ENCODE measurements at regions of chr19 and their contacts with region 1.

Region 1: DNA sequence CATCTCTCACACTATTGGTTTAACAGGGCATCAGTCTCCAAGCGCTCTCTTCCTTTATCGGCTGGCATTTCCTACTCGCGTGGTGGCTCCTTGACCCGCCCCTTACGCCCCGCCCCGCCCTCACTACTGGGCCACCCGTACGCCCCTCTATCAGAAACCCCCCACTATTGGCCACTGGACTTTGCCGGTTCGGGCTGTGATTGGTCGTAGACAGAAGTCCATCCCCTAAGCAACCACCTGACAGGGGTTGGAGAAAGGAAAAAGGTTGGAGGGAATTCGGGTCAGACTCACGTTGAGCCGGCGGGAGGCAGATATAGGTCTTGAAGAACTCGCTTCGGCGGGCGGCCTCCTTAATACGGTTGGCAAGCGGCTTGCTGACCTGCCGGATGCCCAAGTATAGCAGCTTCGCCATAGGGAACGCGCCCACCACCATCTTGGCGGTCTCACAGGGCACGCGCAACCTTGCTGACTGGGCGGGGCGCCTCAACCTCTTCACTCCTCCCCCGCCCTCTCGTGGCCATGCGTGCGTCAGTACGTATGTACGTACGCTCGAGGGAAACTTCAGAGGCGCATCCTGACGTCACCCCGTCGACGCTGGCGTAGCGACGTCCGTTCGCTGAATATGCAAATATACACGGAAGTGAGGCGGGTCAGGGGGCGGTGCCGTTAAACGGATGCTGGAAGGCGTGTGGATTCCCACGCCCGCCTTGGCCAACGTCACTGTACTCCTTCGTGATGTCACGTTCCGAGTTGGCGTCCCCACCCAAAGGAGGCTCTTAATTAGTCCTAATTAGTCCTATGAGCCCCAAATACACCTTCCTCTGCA is at the start of gene OPA3:
- DNase-seq: peak; percentile 88 to 100 (median 99)
- ATAC-seq: peak; percentile 92
- H3K4me3 ChIP-seq: peak within 1 kb of the TSS; percentile 85
- H3K4me3 Mint-ChIP-seq: peak within 1 kb of the TSS; percentile 90 to 99 (median 94)
- H3K27ac ChIP-seq: peak within 1 kb of the TSS; percentile 99
- H3K27ac Mint-ChIP-seq: peak within 1 kb of the TSS; percentile 97 to 100 (median 99)
- H3K4me1 ChIP-seq: peaks cover 6 to 10% of the 10 kb centered on the region in 2 donors
- H3K4me1 Mint-ChIP-seq: peaks cover 0 to 28% (median 20%) of the 10 kb centered on the region in 7 donors
- H3K27me3 ChIP-seq: no peaks in the 10 kb centered on the region
- H3K27me3 Mint-ChIP-seq: peaks cover 5 to 9% (median 7%) of the 10 kb centered on the region in 5 donors
- total RNA-seq, gene OPA3: 7.8 to 14.3 (median 9.0) TPM

Region 2: DNA sequence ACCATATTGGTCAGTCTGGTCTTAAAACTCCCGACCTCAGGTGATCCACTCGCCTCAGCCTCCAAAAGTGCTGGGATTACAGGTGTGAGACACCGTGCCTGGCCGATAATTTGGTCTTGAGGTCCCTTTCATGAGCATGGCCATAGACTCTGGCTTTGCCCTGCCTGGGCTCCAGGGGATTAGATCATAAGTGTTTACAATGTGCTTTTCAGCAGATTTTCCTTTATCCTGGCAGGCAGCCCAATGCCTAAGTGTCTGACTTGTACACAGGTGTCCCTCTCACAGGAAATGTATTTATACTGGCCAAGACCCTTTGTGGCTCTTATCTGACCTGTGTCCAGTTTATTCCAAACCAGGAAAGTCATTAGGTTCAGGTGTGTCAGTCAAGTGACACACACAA is 759.8 kb before region 1 on chr19:
- CTCF ChIA-PET with region 1: no interaction called
- POLR2A ChIA-PET with region 1: no interaction called
- intact Hi-C with region 1: no loop called
- DNase-seq: no peak
- ATAC-seq: no peak
- H3K4me3 ChIP-seq: no peak overlapping the region
- H3K4me3 Mint-ChIP-seq: no peak overlapping the region
- H3K27ac ChIP-seq: no peak overlapping the region
- H3K27ac Mint-ChIP-seq: no peak overlapping the region
- H3K4me1 ChIP-seq: no peaks in the 10 kb centered on the region
- H3K4me1 Mint-ChIP-seq: no peaks in the 10 kb centered on the region
- H3K27me3 ChIP-seq: no peaks in the 10 kb centered on the region
- H3K27me3 Mint-ChIP-seq: peaks cover 0 to 7% (median 3%) of the 10 kb centered on the region in 5 donors

Region 3: DNA sequence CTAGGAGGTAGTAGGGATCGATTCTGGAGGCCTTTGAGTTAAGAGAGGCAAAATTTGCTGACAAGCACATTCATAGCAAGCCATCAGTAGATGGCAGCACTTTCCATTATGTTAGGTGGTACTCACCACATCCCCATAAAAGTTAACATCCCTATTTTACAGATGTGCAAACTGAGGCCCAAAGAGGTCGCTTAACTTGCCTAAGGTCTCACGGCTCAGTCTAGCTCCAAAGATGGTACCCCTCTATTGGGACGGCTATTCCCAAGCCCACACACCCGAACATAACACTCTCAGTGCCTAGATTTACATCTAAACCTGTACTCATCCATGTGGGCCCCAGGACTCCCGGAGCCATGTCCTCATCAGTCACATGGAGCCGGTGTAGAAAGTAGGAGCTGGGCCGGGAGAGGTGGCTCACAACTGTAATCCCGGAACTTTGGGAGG is 138.2 kb before region 1 on chr19:
- CTCF ChIA-PET with region 1: no interaction called
- POLR2A ChIA-PET with region 1: no interaction called
- intact Hi-C with region 1: loop called in 1 of 2 experiments (anchors 1 kb)
- DNase-seq: no peak
- ATAC-seq: no peak
- H3K4me3 ChIP-seq: no peak overlapping the region
- H3K4me3 Mint-ChIP-seq: peak overlapping the region in 4 of 10 donors; percentile 21 to 56 (median 31)
- H3K27ac ChIP-seq: no peak overlapping the region
- H3K27ac Mint-ChIP-seq: peak overlapping the region in 6 of 9 donors; percentile 44 to 89 (median 64)
- H3K4me1 ChIP-seq: peaks cover 29 to 34% of the 10 kb centered on the region in 2 donors
- H3K4me1 Mint-ChIP-seq: peaks cover 30 to 67% (median 56%) of the 10 kb centered on the region in 7 donors
- H3K27me3 ChIP-seq: no peaks in the 10 kb centered on the region
- H3K27me3 Mint-ChIP-seq: peaks cover 0 to 6% (median 0%) of the 10 kb centered on the region in 5 donors

Region 4: DNA sequence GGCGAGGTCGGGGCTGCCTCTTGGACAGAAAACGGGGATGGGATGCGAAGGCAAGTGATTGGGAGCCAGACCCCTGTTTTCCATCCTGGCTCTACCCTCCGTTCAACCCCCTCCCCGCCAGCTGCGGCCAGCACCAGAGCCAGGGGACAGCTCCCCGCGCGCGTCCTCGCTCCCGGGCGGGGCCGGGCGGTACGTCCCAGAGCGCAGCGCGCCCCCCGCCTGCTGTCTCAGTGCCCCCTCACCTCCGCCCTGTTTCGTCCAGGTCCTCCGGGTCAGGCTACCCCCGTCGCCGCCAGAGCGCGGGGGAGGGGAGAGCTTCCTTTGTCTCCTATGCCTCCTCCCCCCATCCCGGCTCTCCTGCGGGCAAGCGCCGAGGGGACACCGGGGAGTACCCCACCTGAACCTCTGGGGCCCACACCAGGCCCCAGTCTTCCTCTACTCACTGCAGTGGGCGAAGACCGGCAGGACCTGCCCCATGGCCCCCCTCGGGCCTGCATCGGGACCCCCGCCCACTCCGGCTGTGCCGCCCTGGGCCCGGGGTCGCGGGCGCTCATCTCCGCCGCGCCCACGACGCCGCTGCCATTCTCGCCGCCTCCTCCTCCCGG is 88.1 kb before region 1 on chr19:
- CTCF ChIA-PET with region 1: no interaction called
- POLR2A ChIA-PET with region 1: interaction called, 3 read pairs
- intact Hi-C with region 1: loop called in 1 of 2 experiments (anchors 1 kb)
- DNase-seq: peak in 7 of 9 donors; percentile 44 to 75 (median 55)
- ATAC-seq: peak; percentile 33
- H3K4me3 ChIP-seq: peak overlapping the region; percentile 65
- H3K4me3 Mint-ChIP-seq: peak overlapping the region; percentile 72 to 97 (median 77)
- H3K27ac ChIP-seq: no peak overlapping the region
- H3K27ac Mint-ChIP-seq: peak overlapping the region in 4 of 9 donors; percentile 12 to 87 (median 48)
- H3K4me1 ChIP-seq: peaks cover 28 to 38% of the 10 kb centered on the region in 2 donors
- H3K4me1 Mint-ChIP-seq: peaks cover 28 to 52% (median 48%) of the 10 kb centered on the region in 7 donors
- H3K27me3 ChIP-seq: no peaks in the 10 kb centered on the region
- H3K27me3 Mint-ChIP-seq: peaks cover 12 to 37% (median 19%) of the 10 kb centered on the region in 5 donors

Region 5: DNA sequence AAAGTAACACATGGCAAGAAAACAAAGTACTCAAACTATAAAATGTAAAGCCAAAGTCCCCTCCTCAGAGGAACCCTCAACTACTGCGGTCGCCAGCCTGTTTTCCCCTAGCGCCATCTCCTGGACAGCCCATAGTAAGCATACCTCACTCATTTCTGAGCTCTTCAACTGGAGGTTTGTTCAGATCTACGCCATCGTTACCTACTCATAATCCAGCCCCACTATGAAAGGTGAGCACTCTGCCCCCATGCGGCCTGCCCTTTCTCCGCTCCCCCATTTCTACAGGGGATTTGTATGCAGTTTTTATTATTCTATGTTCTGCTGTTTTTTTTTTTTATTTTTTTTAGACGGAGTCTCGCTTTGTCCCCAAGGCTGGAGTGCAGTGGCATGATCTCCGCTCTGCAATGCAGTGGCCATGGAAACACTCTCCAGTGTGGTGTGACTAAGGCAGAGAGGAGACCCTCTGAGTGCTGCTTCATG is 26.1 kb before region 1 on chr19:
- CTCF ChIA-PET with region 1: interaction called, 3 read pairs
- POLR2A ChIA-PET with region 1: interaction called, 3 read pairs
- intact Hi-C with region 1: loop called in 1 of 2 experiments (anchors 1 kb)
- DNase-seq: peak; percentile 37 to 85 (median 81)
- ATAC-seq: peak; percentile 99
- H3K4me3 ChIP-seq: no peak overlapping the region
- H3K4me3 Mint-ChIP-seq: peak overlapping the region in 3 of 10 donors; percentile 52 to 75 (median 59)
- H3K27ac ChIP-seq: peak overlapping the region; percentile 18
- H3K27ac Mint-ChIP-seq: peak overlapping the region in 8 of 9 donors; percentile 14 to 86 (median 66)
- H3K4me1 ChIP-seq: peaks cover 0 to 29% of the 10 kb centered on the region in 2 donors
- H3K4me1 Mint-ChIP-seq: peaks cover 20 to 48% (median 34%) of the 10 kb centered on the region in 7 donors
- H3K27me3 ChIP-seq: no peaks in the 10 kb centered on the region
- H3K27me3 Mint-ChIP-seq: no peaks in the 10 kb centered on the region

Region 6: DNA sequence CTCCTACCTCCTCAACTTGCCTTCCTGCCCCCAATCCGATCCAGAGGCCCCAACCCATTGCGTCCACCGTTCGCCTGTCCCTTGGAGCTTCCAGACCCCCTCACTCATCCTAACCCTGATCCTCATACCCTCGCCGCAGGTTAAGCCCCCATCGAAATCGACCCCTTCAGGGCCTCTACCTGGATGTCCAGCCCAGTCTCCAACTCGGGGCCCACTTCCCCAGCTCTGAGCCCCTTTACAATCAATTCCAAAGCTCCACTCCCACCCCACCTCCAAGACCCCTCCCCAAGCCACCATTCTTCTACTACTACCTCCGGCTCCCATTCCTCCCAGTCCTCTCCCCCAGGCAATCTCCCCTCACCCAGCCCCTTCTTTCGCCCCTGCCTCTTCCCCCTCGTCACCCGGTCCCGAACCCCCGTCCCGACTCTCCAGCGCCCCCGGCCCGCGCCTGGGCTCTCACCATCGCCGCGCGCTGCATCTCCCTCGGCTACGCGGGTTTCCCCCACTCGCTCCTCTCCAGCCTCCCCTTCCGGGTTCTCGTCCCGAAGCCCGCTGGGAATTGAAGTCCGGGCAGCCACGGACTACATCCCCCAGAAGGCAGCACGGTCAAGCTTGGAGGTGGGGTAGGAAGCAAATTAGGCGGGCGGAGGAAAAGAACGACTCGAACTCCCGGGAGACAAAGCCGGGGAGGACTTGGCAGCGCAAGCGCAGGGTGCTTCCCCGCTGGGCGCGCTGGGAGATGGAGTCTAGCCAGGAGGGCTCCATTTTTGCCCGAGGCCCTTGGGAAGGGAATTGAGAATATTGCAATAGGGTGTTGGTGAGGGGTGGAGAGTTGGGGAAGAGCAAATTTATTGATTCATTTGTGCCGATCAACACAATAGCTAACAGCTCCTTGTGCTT is 146.1 kb after region 1 on chr19 and contains the start of gene FBXO46:
- CTCF ChIA-PET with region 1: no interaction called
- POLR2A ChIA-PET with region 1: no interaction called
- intact Hi-C with region 1: loop called in 1 of 2 experiments (anchors 1 kb)
- DNase-seq: peak; percentile 74 to 94 (median 90)
- ATAC-seq: peak; percentile 99
- H3K4me3 ChIP-seq: peak within 1 kb of the TSS; percentile 96
- H3K4me3 Mint-ChIP-seq: peak within 1 kb of the TSS; percentile 85 to 98 (median 92)
- H3K27ac ChIP-seq: peak within 1 kb of the TSS; percentile 92
- H3K27ac Mint-ChIP-seq: peak within 1 kb of the TSS; percentile 60 to 93 (median 91)
- H3K4me1 ChIP-seq: peaks cover 6 to 14% of the 10 kb centered on the region in 2 donors
- H3K4me1 Mint-ChIP-seq: peaks cover 27 to 41% (median 33%) of the 10 kb centered on the region in 7 donors
- H3K27me3 ChIP-seq: no peaks in the 10 kb centered on the region
- H3K27me3 Mint-ChIP-seq: peaks cover 0 to under 1% (median 0%) of the 10 kb centered on the region in 5 donors
- total RNA-seq, gene FBXO46: 21.2 to 52.9 (median 36.6) TPM

Region 7: DNA sequence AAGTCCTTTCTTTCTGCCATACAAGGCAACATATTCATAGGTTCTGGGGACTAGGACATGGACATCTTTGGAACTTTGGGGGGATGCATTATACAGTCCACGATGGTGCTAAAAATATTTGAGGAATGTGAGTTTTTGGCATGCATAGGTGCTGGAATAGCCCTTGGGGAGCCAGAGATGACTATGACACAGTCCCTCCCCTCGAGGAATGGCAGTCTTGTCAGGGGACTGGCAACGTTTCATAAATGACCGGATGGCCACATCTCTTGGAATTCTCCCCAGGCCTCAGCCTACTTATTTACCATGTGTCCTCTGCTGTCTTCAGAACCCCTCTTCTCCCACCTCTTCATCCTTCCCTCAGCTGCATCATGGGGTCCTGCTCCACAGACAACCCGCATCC is 162.3 kb after region 1 on chr19:
- CTCF ChIA-PET with region 1: no interaction called
- POLR2A ChIA-PET with region 1: no interaction called
- intact Hi-C with region 1: no loop called
- DNase-seq: no peak
- ATAC-seq: no peak
- H3K4me3 ChIP-seq: no peak overlapping the region
- H3K4me3 Mint-ChIP-seq: no peak overlapping the region
- H3K27ac ChIP-seq: no peak overlapping the region
- H3K27ac Mint-ChIP-seq: no peak overlapping the region
- H3K4me1 ChIP-seq: no peaks in the 10 kb centered on the region
- H3K4me1 Mint-ChIP-seq: no peaks in the 10 kb centered on the region
- H3K27me3 ChIP-seq: no peaks in the 10 kb centered on the region
- H3K27me3 Mint-ChIP-seq: peaks cover 5 to 22% (median 11%) of the 10 kb centered on the region in 5 donors

Measured in naive thymus-derived CD4-positive, alpha-beta T cell (primary cell).